ENCODE measurements at regions of chr1 and their contacts with region 1.

Region 1: GRCh38 chr1:43067977-43068751 is 103.9 kb downstream of the EBNA1BP2 start:
- DNase-seq: peak in 1 of 2 experiments; percentile 43
- H3K4me3 ChIP-seq: no peak overlapping the region
- H3K4me1 ChIP-seq: no peaks in the 10 kb centered on the region
- H3K27me3 ChIP-seq: no peaks in the 10 kb centered on the region

Region 2: GRCh38 chr1:42777852-42778251 is 290.3 kb before region 1 on chr1:
- in situ Hi-C with region 1: loop called (anchors 5 kb)
- DNase-seq: peak; percentile 21 to 51
- H3K4me3 ChIP-seq: no peak overlapping the region
- H3K4me1 ChIP-seq: no peaks in the 10 kb centered on the region
- H3K27me3 ChIP-seq: no peaks in the 10 kb centered on the region

Region 3: GRCh38 chr1:42941640-42942330 is 126.4 kb before region 1 on chr1:
- in situ Hi-C with region 1: loop called (anchors 10 kb)
- DNase-seq: no peak
- H3K4me3 ChIP-seq: no peak overlapping the region
- H3K4me1 ChIP-seq: no peaks in the 10 kb centered on the region
- H3K27me3 ChIP-seq: no peaks in the 10 kb centered on the region

Region 4: GRCh38 chr1:42962641-42963377 is 105.4 kb before region 1 on chr1:
- in situ Hi-C with region 1: no loop called
- DNase-seq: no peak
- H3K4me3 ChIP-seq: no peak overlapping the region
- H3K4me1 ChIP-seq: peaks cover 7% of the 10 kb centered on the region
- H3K27me3 ChIP-seq: no peaks in the 10 kb centered on the region

Region 5: DNA sequence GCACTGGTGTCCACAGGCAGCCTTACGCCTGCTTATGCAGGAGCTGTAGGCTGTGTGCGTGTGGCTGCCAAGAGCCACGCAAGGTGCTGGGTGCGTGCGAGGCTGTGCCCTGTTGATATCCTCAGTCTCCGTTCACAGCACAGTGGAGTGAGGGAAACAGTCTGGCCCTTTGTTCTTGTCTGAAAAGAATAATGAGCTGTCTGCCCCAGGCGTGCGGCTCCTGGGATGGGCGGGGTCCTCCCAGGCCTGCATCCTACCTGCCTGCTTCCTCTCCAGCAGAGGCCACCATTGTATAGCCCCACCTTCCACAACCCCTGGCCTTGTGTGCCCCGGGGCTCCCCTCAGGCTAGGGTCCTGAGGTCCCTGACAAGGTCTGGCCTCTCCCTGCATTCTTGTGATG is 534.8 kb after region 1 on chr1:
- in situ Hi-C with region 1: no loop called
- DNase-seq: peak in 1 of 2 experiments; percentile 25
- H3K4me3 ChIP-seq: no peak overlapping the region
- H3K4me1 ChIP-seq: no peaks in the 10 kb centered on the region
- H3K27me3 ChIP-seq: no peaks in the 10 kb centered on the region

Measured in HAP-1 (cell line).